BJ (cell line): ENCODE measurements at regions of chr22 and their contacts with region 1.

Region 1: DNA sequence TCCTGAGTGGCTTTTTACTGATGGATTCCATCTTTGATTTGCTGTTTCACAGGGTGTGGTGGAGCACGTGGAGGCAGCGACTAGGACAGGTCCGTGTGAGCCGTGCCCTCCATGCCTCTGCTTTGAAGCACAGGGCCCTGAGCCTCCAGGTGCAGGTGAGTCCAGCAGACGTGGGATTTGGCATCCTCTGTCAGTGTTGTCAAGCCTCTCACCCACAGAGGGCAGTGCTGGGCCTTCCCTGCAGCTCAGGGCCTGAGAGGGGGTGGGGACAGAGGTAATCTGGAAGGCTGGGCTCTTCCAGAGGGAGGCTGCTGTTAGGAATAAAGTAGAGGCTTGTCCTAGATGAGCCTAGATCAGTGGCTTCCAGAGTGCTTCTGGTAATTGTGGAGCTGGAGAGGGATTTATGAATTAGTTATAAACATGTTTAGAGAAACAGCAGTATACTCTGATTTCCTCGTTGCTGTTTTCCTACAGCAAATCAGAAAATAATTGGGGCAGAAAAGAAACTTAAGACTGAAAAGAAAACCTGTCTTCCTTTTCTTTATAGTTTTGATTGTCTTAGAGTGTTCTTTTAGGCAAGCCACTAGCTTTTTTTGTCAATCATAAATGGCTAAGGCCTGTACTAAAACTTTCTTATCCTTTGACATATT is 65.0 kb downstream of the SFI1 start:
- DNase-seq: no peak
- H3K4me3 ChIP-seq: no peak overlapping the region
- H3K27me3 ChIP-seq: no peaks in the 10 kb centered on the region
- CTCF ChIP-seq: peak; percentile 96

Region 2: GRCh38 chr22:31544481-31545480 is 16.6 kb before region 1 on chr22:
- CTCF ChIA-PET with region 1: interaction called, 11 read pairs
- POLR2A ChIA-PET with region 1: no interaction called
- DNase-seq: no peak
- H3K4me3 ChIP-seq: no peak overlapping the region
- H3K27me3 ChIP-seq: no peaks in the 10 kb centered on the region
- CTCF ChIP-seq: no peak

Region 3: GRCh38 chr22:31630331-31631329 is 69.3 kb after region 1 on chr22:
- CTCF ChIA-PET with region 1: interaction called, 156 read pairs
- POLR2A ChIA-PET with region 1: interaction called, 3 read pairs
- DNase-seq: no peak
- H3K4me3 ChIP-seq: peak overlapping the region; percentile 74
- H3K27me3 ChIP-seq: no peaks in the 10 kb centered on the region
- CTCF ChIP-seq: no peak